CD8-positive, alpha-beta T cell (primary cell): ENCODE measurements at regions of chr5 and their contacts with region 1.

Region 1: DNA sequence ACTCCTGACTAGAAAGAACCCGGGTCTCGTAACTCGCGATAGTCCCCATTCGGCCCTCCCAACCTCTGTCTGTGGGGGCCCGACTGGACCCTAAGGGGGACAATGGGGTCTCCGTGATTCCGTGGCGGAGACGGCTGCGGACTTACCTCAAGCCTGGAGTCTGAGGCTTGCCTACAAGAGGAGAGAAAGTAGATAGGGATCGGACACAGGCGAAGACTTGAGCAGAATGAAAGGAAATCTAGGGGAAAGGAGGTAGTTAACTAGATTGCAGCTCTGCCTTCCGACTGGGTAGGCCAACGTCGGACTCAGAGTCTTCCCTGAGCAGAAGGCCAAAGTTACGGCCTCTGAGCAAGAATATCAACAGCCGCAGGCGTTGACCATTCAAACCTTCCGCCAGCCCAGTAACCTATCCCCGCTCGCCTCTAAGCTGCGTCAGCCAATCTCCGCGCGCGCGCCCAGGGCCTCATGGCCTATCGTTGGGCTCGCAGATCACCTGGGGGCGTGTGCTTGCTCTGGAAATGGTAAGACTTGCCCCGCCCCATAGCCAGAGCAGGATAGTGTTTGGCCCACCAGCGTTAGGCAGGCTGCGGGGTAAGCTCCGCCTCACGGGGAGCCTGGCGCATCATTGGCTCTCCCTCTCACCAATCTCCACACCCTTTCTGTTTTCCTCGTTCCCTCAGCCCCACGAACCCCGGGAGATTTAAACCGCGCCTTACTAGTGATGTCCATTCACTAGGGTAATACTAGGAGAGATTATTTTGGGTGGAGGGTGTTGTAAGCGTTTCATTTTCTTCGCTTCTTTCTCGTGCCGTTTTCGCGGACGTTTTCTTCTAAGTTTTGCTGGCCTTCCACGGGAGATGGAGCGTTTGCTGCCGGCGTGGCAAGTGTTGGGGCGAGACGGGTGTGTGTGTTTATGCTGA is at the start of gene CDC25C:
- DNase-seq: peak; percentile 91 to 99 (median 95)
- ATAC-seq: peak; percentile 100
- H3K4me3 ChIP-seq: peak within 1 kb of the TSS; percentile 52 to 69
- H3K4me3 Mint-ChIP-seq: peak within 1 kb of the TSS; percentile 86
- H3K27ac ChIP-seq: peak within 1 kb of the TSS in 1 of 2 experiments; percentile 58
- H3K27ac Mint-ChIP-seq: peak within 1 kb of the TSS; percentile 45
- H3K4me1 ChIP-seq: peaks cover 5% of the 10 kb centered on the region
- H3K4me1 Mint-ChIP-seq: peaks cover 16% of the 10 kb centered on the region
- H3K27me3 ChIP-seq: no peaks in the 10 kb centered on the region
- H3K27me3 Mint-ChIP-seq: no peaks in the 10 kb centered on the region
- CTCF ChIP-seq: no peak
- total RNA-seq, gene CDC25C: not detected

Region 2: GRCh38 chr5:138083702-138084101 is 248.0 kb before region 1 on chr5 and contains the start of gene WNT8A:
- CTCF ChIA-PET with region 1: no interaction called
- POLR2A ChIA-PET with region 1: no interaction called
- intact Hi-C with region 1: no loop called
- DNase-seq: no peak
- ATAC-seq: no peak
- H3K4me3 ChIP-seq: no peak within 1 kb of the TSS
- H3K4me3 Mint-ChIP-seq: no peak within 1 kb of the TSS
- H3K27ac ChIP-seq: no peak within 1 kb of the TSS
- H3K27ac Mint-ChIP-seq: no peak within 1 kb of the TSS
- H3K4me1 ChIP-seq: no peaks in the 10 kb centered on the region
- H3K4me1 Mint-ChIP-seq: peaks cover 8% of the 10 kb centered on the region
- H3K27me3 ChIP-seq: no peaks in the 10 kb centered on the region
- H3K27me3 Mint-ChIP-seq: no peaks in the 10 kb centered on the region
- CTCF ChIP-seq: no peak
- total RNA-seq, gene WNT8A: not detected

Region 3: DNA sequence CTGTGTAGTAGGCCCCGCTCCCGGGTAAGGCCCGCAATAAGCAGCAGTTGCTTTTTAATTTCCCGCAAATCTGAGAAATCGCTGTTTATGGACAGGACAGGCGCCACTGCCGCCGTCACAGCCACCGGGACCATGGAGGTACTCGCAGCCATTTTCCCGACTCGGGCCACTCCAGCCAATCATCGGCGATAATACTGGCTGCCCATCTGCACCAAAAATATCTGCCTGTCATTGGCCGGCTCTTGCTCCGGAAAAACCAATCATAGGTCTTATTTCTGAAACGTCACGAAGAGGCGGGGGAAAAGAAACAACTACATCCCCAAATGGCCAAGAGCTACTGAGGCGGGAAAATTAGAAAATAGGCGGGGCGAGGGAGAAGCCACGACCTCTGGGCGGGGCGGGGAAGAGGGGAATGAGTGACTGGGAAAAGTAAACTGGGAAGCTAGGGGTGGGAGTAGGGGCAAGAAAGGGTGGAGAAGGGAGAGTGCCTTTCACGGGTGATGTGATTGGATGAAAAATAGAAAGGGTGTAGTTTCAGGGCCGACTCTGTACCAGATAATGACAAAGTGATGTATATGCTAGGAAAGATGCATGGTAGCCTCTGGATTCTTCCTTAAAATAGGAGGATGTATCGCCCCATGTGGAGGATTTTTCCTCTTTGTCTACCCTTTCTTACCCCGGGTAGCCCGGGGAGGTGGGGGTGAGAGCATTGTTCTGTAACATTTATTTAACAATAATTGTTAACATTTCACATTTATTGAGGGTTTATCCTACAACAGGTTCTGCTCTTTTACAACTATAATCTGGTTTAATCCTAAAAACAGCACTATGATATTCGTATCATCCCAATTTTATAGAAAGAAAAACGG is 118.3 kb before region 1 on chr5 and contains the start of gene CDC23:
- CTCF ChIA-PET with region 1: no interaction called
- POLR2A ChIA-PET with region 1: no interaction called
- intact Hi-C with region 1: loop called (anchors 1 to 2 kb)
- DNase-seq: peak; percentile 76 to 97 (median 89)
- ATAC-seq: peak; percentile 97
- H3K4me3 ChIP-seq: peak within 1 kb of the TSS; percentile 91 to 93
- H3K4me3 Mint-ChIP-seq: peak within 1 kb of the TSS; percentile 100
- H3K27ac ChIP-seq: peak within 1 kb of the TSS; percentile 81 to 86
- H3K27ac Mint-ChIP-seq: peak within 1 kb of the TSS; percentile 98
- H3K4me1 ChIP-seq: peaks cover 18% of the 10 kb centered on the region
- H3K4me1 Mint-ChIP-seq: peaks cover 21% of the 10 kb centered on the region
- H3K27me3 ChIP-seq: no peaks in the 10 kb centered on the region
- H3K27me3 Mint-ChIP-seq: peaks cover 2% of the 10 kb centered on the region
- CTCF ChIP-seq: no peak
- total RNA-seq, gene CDC23: 18.2 to 20.5 TPM

Region 4: GRCh38 chr5:138464008-138464387 is 132.3 kb after region 1 on chr5:
- CTCF ChIA-PET with region 1: no interaction called
- POLR2A ChIA-PET with region 1: no interaction called
- intact Hi-C with region 1: loop called (anchors 1 to 5 kb)
- DNase-seq: peak; percentile 85 to 98 (median 93)
- ATAC-seq: peak; percentile 47
- H3K4me3 ChIP-seq: peak overlapping the region; percentile 91 to 97
- H3K4me3 Mint-ChIP-seq: peak overlapping the region; percentile 91
- H3K27ac ChIP-seq: peak overlapping the region; percentile 79 to 100
- H3K27ac Mint-ChIP-seq: peak overlapping the region; percentile 93
- H3K4me1 ChIP-seq: peaks cover 51% of the 10 kb centered on the region
- H3K4me1 Mint-ChIP-seq: peaks cover 48% of the 10 kb centered on the region
- H3K27me3 ChIP-seq: no peaks in the 10 kb centered on the region
- H3K27me3 Mint-ChIP-seq: no peaks in the 10 kb centered on the region
- CTCF ChIP-seq: peak; percentile 87

Region 5: GRCh38 chr5:138559937-138560336 is 228.2 kb after region 1 on chr5:
- CTCF ChIA-PET with region 1: no interaction called
- POLR2A ChIA-PET with region 1: no interaction called
- intact Hi-C with region 1: no loop called
- DNase-seq: no peak
- ATAC-seq: no peak
- H3K4me3 ChIP-seq: no peak overlapping the region
- H3K4me3 Mint-ChIP-seq: no peak overlapping the region
- H3K27ac ChIP-seq: no peak overlapping the region
- H3K27ac Mint-ChIP-seq: no peak overlapping the region
- H3K4me1 ChIP-seq: peaks cover 14% of the 10 kb centered on the region
- H3K4me1 Mint-ChIP-seq: peaks cover 37% of the 10 kb centered on the region
- H3K27me3 ChIP-seq: no peaks in the 10 kb centered on the region
- H3K27me3 Mint-ChIP-seq: no peaks in the 10 kb centered on the region
- CTCF ChIP-seq: no peak

Region 6: DNA sequence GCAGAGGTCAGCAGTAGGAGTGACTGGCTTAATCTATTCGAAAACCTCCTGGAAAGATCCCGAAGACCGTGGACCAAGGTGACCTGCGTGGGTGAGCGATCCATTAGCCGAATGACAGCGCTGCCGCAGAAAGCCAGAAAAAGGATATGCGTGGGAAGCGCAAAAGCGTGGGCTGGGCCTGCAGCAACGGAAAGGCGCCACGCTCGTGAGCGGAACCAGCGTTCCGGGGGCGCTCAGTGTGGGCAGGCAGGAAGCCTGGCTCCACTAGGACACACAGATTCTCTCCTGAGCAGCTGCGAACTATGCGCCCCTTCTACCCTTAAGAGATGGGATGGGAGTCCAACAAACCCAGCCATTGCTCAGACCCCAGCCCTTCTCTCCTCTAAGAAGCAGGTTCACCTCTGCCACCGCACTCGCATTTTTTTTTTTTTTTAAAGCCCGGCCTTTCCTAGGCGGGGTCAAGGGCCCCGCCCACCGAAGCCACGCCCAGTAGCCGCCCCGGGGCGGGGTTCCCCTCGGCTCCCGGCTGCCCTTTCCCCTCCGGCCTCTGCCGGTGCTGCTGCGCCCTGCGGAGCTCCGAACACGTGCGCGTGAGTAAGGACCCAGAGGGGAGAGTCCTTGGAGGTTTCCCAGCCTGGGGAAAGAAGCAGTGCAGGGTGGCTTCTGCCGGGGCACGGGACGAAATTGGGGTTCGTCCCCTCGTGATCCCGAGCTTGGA is 942.0 kb after region 1 on chr5:
- CTCF ChIA-PET with region 1: interaction called, 3 read pairs
- POLR2A ChIA-PET with region 1: no interaction called
- intact Hi-C with region 1: loop called in 1 of 2 experiments (anchors 5 kb)
- DNase-seq: peak; percentile 73 to 91 (median 83)
- ATAC-seq: peak; percentile 90
- H3K4me3 ChIP-seq: peak overlapping the region; percentile 81 to 86
- H3K4me3 Mint-ChIP-seq: peak overlapping the region; percentile 88
- H3K27ac ChIP-seq: peak overlapping the region; percentile 56 to 57
- H3K27ac Mint-ChIP-seq: peak overlapping the region; percentile 72
- H3K4me1 ChIP-seq: peaks cover 36% of the 10 kb centered on the region
- H3K4me1 Mint-ChIP-seq: peaks cover 50% of the 10 kb centered on the region
- H3K27me3 ChIP-seq: no peaks in the 10 kb centered on the region
- H3K27me3 Mint-ChIP-seq: no peaks in the 10 kb centered on the region
- CTCF ChIP-seq: no peak